ENCODE measurements at regions of chr1 and their contacts with region 1.

Region 1: GRCh38 chr1:6624710-6625583 is at the start of gene THAP3:
- DNase-seq: peak; percentile 97
- H3K4me3 ChIP-seq: peak within 1 kb of the TSS; percentile 76 to 99 (median 84)
- H3K27ac ChIP-seq: peak within 1 kb of the TSS; percentile 84 to 92 (median 91)
- H3K4me1 ChIP-seq: peaks cover 17 to 64% (median 49%) of the 10 kb centered on the region in 4 donors
- H3K27me3 ChIP-seq: no peaks in the 10 kb centered on the region
- CTCF ChIP-seq: no peak
- EP300 ChIP-seq: no peak
- POLR2A ChIP-seq: no peak
- total RNA-seq, gene THAP3: 13.8 to 34.6 (median 25.0) TPM

Region 2: DNA sequence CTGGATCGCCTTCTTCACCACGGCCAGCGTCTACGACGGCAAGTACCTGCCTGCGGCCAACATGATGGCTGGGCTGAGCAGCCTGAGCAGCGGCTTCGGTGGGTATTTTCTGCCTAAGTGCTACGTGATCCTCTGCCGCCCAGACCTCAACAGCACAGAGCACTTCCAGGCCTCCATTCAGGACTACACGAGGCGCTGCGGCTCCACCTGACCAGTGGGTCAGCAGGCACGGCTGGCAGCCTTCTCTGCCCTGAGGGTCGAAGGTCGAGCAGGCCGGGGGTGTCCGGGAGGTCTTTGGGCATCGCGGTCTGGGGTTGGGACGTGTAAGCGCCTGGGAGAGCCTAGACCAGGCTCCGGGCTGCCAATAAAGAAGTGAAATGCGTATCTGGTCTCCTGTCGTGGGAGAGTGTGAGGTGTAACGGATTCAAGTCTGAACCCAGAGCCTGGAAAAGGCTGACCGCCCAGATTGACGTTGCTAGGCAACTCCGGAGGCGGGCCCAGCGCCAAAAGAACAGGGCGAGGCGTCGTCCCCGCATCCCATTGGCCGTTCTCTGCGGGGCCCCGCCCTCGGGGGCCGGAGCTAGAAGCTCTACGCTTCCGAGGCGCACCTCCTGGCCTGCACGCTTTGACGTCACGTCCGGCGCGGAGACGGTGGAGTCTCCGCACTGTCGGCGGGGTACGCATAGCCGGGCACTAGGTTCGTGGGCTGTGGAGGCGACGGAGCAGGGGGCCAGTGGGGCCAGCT is 45.4 kb before region 1 on chr1 and contains the start of gene ZBTB48:
- intact Hi-C with region 1: loop called (anchors 5 kb)
- DNase-seq: peak; percentile 100
- H3K4me3 ChIP-seq: peak within 1 kb of the TSS; percentile 85 to 98 (median 96)
- H3K27ac ChIP-seq: peak within 1 kb of the TSS; percentile 95 to 98 (median 97)
- H3K4me1 ChIP-seq: peaks cover 32 to 44% (median 41%) of the 10 kb centered on the region in 4 donors
- H3K27me3 ChIP-seq: no peaks in the 10 kb centered on the region
- CTCF ChIP-seq: no peak
- EP300 ChIP-seq: no peak
- POLR2A ChIP-seq: peak; percentile 96
- total RNA-seq, gene ZBTB48: 15.0 to 24.9 (median 16.4) TPM

Measured in esophagus muscularis mucosa (tissue), 4 donors.